Gastrocnemius medialis (tissue), 4 donors: ENCODE measurements at regions of chr22 and their contacts with region 1.

Region 1: DNA sequence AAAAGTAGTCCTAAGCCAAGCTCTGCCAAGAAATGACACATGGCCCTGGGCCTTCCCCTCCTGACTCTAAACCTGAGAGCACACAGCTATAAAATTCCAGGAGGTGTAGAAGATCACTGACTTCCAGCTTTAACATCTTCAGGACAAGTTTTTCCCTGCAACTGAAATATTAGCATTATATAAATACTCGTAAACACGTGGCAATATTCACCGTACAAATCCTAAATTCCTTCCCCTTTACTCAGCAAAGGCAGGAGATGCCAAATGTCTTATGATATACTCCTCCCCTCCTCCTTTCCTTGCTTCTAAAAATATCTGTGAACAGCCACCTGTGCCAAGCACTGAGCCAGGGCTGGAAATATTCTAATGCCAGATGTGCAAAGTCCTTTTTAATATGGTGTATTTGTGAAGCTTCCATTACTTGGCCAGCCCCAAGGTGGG is 194.0 kb downstream of the LARGE1 start:
- DNase-seq: peak; percentile 8 to 36
- ATAC-seq: peak; percentile 90 to 95
- H3K4me3 ChIP-seq: no peak overlapping the region
- H3K27ac ChIP-seq: peak overlapping the region; percentile 34 to 73 (median 60)
- H3K4me1 ChIP-seq: peaks cover 34 to 36% of the 10 kb centered on the region in 2 donors
- H3K27me3 ChIP-seq: no peaks in the 10 kb centered on the region
- CTCF ChIP-seq: no peak
- POLR2A ChIP-seq: no peak

Region 2: GRCh38 chr22:33803371-33804282 is 77.3 kb after region 1 on chr22:
- in situ Hi-C with region 1: no loop called
- intact Hi-C with region 1: loop called (anchors 5 kb)
- DNase-seq: no peak
- ATAC-seq: peak; percentile 72 to 80
- H3K4me3 ChIP-seq: no peak overlapping the region
- H3K27ac ChIP-seq: no peak overlapping the region
- H3K4me1 ChIP-seq: peaks cover 38 to 49% of the 10 kb centered on the region in 2 donors
- H3K27me3 ChIP-seq: no peaks in the 10 kb centered on the region
- CTCF ChIP-seq: no peak
- POLR2A ChIP-seq: no peak